ENCODE measurements at regions of chr1 and their contacts with region 1.

Region 1: DNA sequence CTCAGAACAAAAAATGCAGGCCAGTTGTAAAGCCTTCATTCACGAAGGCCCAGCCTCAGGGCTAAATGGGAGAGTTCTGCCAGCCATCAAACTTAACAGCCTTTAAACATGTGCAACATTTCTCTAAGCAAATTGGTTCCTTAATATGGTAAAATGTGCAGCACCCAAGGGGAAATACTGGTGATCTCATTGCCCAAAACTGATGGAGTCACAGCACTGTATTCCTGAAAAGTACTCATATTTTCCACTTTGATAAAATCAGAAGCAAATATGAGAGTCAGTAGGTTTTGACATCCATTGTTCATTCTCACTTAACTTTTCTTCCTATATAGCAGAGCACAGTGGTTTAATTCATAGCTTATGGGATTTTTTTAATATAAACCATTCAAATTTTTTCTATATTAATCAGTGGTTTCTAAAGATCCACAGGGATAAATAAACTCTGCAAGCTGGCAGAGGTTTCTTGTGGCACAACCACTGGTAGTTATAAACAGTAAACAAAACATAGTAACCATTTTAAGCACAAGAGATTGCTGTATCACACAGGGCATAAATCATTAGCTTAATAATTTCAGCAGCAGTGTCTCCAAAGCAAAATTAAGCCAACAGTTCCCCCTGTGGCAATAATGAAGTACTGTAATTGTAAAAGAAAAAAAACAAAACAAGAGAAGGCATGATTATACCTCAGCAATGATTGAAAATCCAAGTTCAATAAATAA is 106.9 kb upstream of the LYPLAL1 start:
- DNase-seq: peak; percentile 35
- H3K4me3 Mint-ChIP-seq: no peak overlapping the region
- H3K27ac Mint-ChIP-seq: peak overlapping the region; percentile 98
- H3K4me1 Mint-ChIP-seq: peaks cover 16% of the 10 kb centered on the region
- H3K27me3 Mint-ChIP-seq: no peaks in the 10 kb centered on the region
- CTCF ChIP-seq: peak; percentile 53

Region 2: GRCh38 chr1:218339267-218339831 is 727.4 kb before region 1 on chr1:
- CTCF ChIA-PET with region 1: interaction called, 18 read pairs
- intact Hi-C with region 1: loop called (anchors 2 kb)
- DNase-seq: no peak
- H3K4me3 Mint-ChIP-seq: no peak overlapping the region
- H3K27ac Mint-ChIP-seq: no peak overlapping the region
- H3K4me1 Mint-ChIP-seq: peaks cover 20% of the 10 kb centered on the region
- H3K27me3 Mint-ChIP-seq: no peaks in the 10 kb centered on the region
- CTCF ChIP-seq: peak; percentile 63

Region 3: GRCh38 chr1:218546309-218546708 is 520.5 kb before region 1 on chr1:
- CTCF ChIA-PET with region 1: interaction called, 13 read pairs
- intact Hi-C with region 1: loop called (anchors 1 kb)
- DNase-seq: peak; percentile 24
- H3K4me3 Mint-ChIP-seq: no peak overlapping the region
- H3K27ac Mint-ChIP-seq: peak overlapping the region; percentile 0
- H3K4me1 Mint-ChIP-seq: peaks cover 38% of the 10 kb centered on the region
- H3K27me3 Mint-ChIP-seq: no peaks in the 10 kb centered on the region
- CTCF ChIP-seq: no peak

Region 4: GRCh38 chr1:218592688-218593087 is 474.1 kb before region 1 on chr1:
- CTCF ChIA-PET with region 1: no interaction called
- intact Hi-C with region 1: no loop called
- DNase-seq: no peak
- H3K4me3 Mint-ChIP-seq: no peak overlapping the region
- H3K27ac Mint-ChIP-seq: peak overlapping the region; percentile 34
- H3K4me1 Mint-ChIP-seq: peaks cover 56% of the 10 kb centered on the region
- H3K27me3 Mint-ChIP-seq: no peaks in the 10 kb centered on the region
- CTCF ChIP-seq: no peak

Region 5: GRCh38 chr1:218760601-218761570 is 305.9 kb before region 1 on chr1:
- CTCF ChIA-PET with region 1: no interaction called
- intact Hi-C with region 1: loop called (anchors 5 kb)
- DNase-seq: no peak
- H3K4me3 Mint-ChIP-seq: no peak overlapping the region
- H3K27ac Mint-ChIP-seq: peak overlapping the region; percentile 83
- H3K4me1 Mint-ChIP-seq: peaks cover 67% of the 10 kb centered on the region
- H3K27me3 Mint-ChIP-seq: no peaks in the 10 kb centered on the region
- CTCF ChIP-seq: no peak

Region 6: GRCh38 chr1:218874313-218874712 is 192.5 kb before region 1 on chr1:
- CTCF ChIA-PET with region 1: interaction called, 11 read pairs
- intact Hi-C with region 1: loop called (anchors 2 kb)
- DNase-seq: peak; percentile 52
- H3K4me3 Mint-ChIP-seq: peak overlapping the region; percentile 47
- H3K27ac Mint-ChIP-seq: peak overlapping the region; percentile 68
- H3K4me1 Mint-ChIP-seq: peaks cover 59% of the 10 kb centered on the region
- H3K27me3 Mint-ChIP-seq: no peaks in the 10 kb centered on the region
- CTCF ChIP-seq: no peak

Region 7: GRCh38 chr1:219010720-219011119 is 56.1 kb before region 1 on chr1:
- CTCF ChIA-PET with region 1: no interaction called
- intact Hi-C with region 1: no loop called
- DNase-seq: no peak
- H3K4me3 Mint-ChIP-seq: no peak overlapping the region
- H3K27ac Mint-ChIP-seq: no peak overlapping the region
- H3K4me1 Mint-ChIP-seq: peaks cover 37% of the 10 kb centered on the region
- H3K27me3 Mint-ChIP-seq: no peaks in the 10 kb centered on the region
- CTCF ChIP-seq: no peak

Region 8: GRCh38 chr1:219566951-219567947 is 500.5 kb after region 1 on chr1:
- CTCF ChIA-PET with region 1: no interaction called
- intact Hi-C with region 1: loop called (anchors 10 kb)
- DNase-seq: peak; percentile 36
- H3K4me3 Mint-ChIP-seq: no peak overlapping the region
- H3K27ac Mint-ChIP-seq: no peak overlapping the region
- H3K4me1 Mint-ChIP-seq: peaks cover 23% of the 10 kb centered on the region
- H3K27me3 Mint-ChIP-seq: no peaks in the 10 kb centered on the region
- CTCF ChIP-seq: peak; percentile 45

Measured in Calu3 (cell line).